H1 (cell line): ENCODE measurements at regions of chr7 and their contacts with region 1.

Region 1: GRCh38 chr7:151244196-151244840 is 4.2 kb downstream of the SMARCD3 start:
- DNase-seq: peak in 1 of 2 experiments; percentile 84
- H3K4me3 ChIP-seq: peak overlapping the region in 1 of 4 experiments; percentile 61; a peak in 4 of 8 replicates
- H3K27ac ChIP-seq: no peak overlapping the region
- H3K4me1 ChIP-seq: peaks cover 0 to 43% (median 29%) of the 10 kb centered on the region in 4 experiments; a peak in 6 of 7 replicates
- H3K27me3 ChIP-seq: peaks cover 16 to 46% (median 39%) of the 10 kb centered on the region in 4 experiments
- CTCF ChIP-seq: peak in 2 of 3 experiments; percentile 80 to 85; a peak in 3 of 4 replicates
- EP300 ChIP-seq: no peak
- POLR2A ChIP-seq: no peak
- RAD21 ChIP-seq: peak; percentile 63 to 79

Region 2: GRCh38 chr7:151172273-151173141 is 71.8 kb before region 1 on chr7:
- CTCF ChIA-PET with region 1: interaction called, 21 read pairs
- POLR2A ChIA-PET with region 1: no interaction called
- DNase-seq: peak in 1 of 2 experiments; percentile 93
- H3K4me3 ChIP-seq: no peak overlapping the region
- H3K27ac ChIP-seq: no peak overlapping the region
- H3K4me1 ChIP-seq: no peaks in the 10 kb centered on the region; a peak in 1 of 7 replicates
- H3K27me3 ChIP-seq: peaks cover 24 to 67% (median 55%) of the 10 kb centered on the region in 4 experiments
- CTCF ChIP-seq: peak in 2 of 3 experiments; percentile 100; a peak in 3 of 4 replicates
- EP300 ChIP-seq: no peak
- POLR2A ChIP-seq: no peak
- RAD21 ChIP-seq: peak; percentile 93 to 97

Region 3: GRCh38 chr7:151218170-151218569 is 26.1 kb before region 1 on chr7:
- CTCF ChIA-PET with region 1: interaction called, 20 read pairs
- POLR2A ChIA-PET with region 1: interaction called, 3 read pairs
- DNase-seq: no peak
- H3K4me3 ChIP-seq: no peak overlapping the region
- H3K27ac ChIP-seq: no peak overlapping the region
- H3K4me1 ChIP-seq: no peaks in the 10 kb centered on the region
- H3K27me3 ChIP-seq: no peaks in the 10 kb centered on the region
- CTCF ChIP-seq: no peak
- EP300 ChIP-seq: no peak
- POLR2A ChIP-seq: no peak
- RAD21 ChIP-seq: no peak

Region 4: DNA sequence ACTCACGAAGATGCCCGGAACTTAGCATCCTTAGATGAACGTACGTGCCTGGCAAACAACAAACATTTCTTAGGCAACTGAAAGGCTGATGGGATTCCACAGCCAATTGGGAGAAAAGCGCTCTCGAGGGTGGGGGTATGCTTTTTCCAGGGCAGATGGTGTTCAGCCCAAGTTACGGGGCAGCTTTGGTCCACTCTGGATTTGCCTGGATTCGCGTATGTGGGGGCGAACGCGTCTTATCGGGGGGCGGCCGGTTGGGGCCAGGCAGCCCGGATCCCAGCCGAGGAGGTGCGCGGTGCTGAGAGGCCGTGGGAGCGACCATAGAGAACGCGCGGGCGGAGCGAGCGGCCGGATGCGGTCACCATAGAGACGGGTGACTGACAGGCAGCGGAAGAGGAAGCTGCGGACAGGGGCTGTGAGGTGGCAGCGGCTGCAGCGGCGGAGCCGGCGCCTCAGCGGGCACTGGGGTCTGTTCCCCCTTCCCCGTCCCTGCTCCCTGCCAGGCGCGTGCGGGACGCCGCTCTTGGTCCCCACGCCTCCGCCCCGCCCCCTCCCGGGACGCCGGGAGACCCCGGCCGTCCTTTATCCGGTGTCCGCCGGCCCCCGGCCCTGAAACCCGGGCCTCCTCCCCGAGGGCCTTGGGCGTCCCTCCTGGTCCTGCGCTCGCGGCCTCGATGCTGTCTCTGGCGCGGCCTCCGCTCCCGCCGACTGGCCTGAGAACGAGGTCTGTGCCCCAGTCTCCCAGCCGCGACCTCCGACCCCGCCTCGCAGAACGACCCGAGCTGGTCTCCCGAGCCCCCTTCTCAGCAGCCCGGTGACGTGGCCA is 12.0 kb before region 1 on chr7 and contains the start of gene CHPF2:
- CTCF ChIA-PET with region 1: interaction called, 71 read pairs
- POLR2A ChIA-PET with region 1: interaction called, 16 read pairs
- DNase-seq: peak in 1 of 2 experiments; percentile 93
- H3K4me3 ChIP-seq: peak within 1 kb of the TSS; percentile 72 to 96 (median 90)
- H3K27ac ChIP-seq: no peak within 1 kb of the TSS; the same call in 1 of the 2 replicates
- H3K4me1 ChIP-seq: peaks cover 4 to 9% (median 6%) of the 10 kb centered on the region in 4 experiments; a peak in 5 of 7 replicates
- H3K27me3 ChIP-seq: no peaks in the 10 kb centered on the region
- CTCF ChIP-seq: no peak
- EP300 ChIP-seq: no peak
- POLR2A ChIP-seq: peak in 1 of 2 experiments; percentile 75; a peak in 2 of 3 replicates
- RAD21 ChIP-seq: no peak
- total RNA-seq, gene CHPF2: 20.6 and 20.8 TPM in 2 replicates

Region 5: DNA sequence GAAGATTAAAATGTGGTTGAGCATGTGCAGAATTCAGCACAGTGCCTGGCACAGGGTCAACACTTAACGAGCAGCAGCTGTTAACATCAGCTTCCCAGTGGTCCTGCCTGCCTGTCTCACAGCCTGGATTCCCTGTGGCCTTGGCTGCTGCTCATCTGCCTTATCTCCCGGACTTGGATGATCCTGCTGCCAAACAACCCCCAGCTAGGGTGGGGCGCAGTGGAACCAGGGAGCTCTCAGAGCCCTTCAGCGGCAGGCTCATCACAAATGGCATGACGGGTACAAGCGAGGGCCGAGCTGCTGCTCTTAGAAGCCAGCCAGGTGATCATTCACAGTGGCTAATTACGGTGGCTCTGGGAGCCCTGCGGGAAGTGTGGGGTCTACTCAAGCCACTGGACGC is 17.2 kb after region 1 on chr7:
- CTCF ChIA-PET with region 1: interaction called, 25 read pairs
- POLR2A ChIA-PET with region 1: interaction called, 4 read pairs
- DNase-seq: no peak
- H3K4me3 ChIP-seq: no peak overlapping the region
- H3K27ac ChIP-seq: no peak overlapping the region
- H3K4me1 ChIP-seq: no peaks in the 10 kb centered on the region; a peak in 1 of 7 replicates
- H3K27me3 ChIP-seq: peaks cover 0 to 1% (median under 1%) of the 10 kb centered on the region in 4 experiments; a peak in 2 of 7 replicates
- CTCF ChIP-seq: no peak
- EP300 ChIP-seq: no peak
- POLR2A ChIP-seq: no peak
- RAD21 ChIP-seq: no peak

Region 6: DNA sequence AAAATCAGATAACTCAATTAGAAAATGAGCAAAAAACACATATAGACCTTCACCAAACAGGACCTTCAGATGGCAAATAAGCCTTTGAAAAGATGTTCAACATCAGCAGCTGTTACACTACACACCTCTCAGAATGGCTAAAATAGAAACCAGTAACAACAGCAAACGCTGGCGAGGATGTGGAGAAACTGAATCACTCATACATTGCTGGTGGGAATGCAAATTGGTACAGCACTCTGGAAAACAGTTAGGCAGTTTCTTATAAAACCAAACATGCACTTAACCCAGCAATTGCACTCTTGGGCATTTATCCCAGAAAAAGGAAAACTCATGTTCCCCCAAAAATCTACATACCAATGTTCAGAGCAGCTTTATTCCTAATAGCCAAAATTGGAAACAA is 41.8 kb after region 1 on chr7:
- CTCF ChIA-PET with region 1: interaction called, 17 read pairs
- POLR2A ChIA-PET with region 1: no interaction called
- DNase-seq: no peak
- H3K4me3 ChIP-seq: no peak overlapping the region
- H3K27ac ChIP-seq: no peak overlapping the region
- H3K4me1 ChIP-seq: peaks cover 0 to 5% (median 0%) of the 10 kb centered on the region in 4 experiments; a peak in 1 of 7 replicates
- H3K27me3 ChIP-seq: no peaks in the 10 kb centered on the region
- CTCF ChIP-seq: no peak
- EP300 ChIP-seq: no peak
- POLR2A ChIP-seq: no peak
- RAD21 ChIP-seq: no peak

Region 7: GRCh38 chr7:151408839-151409666 is 164.7 kb after region 1 on chr7:
- CTCF ChIA-PET with region 1: no interaction called
- POLR2A ChIA-PET with region 1: no interaction called
- DNase-seq: peak in 1 of 2 experiments; percentile 75
- H3K4me3 ChIP-seq: peak overlapping the region; percentile 69 to 84 (median 80)
- H3K27ac ChIP-seq: no peak overlapping the region
- H3K4me1 ChIP-seq: peaks cover 0 to 22% (median 16%) of the 10 kb centered on the region in 4 experiments; a peak in 6 of 7 replicates
- H3K27me3 ChIP-seq: peaks cover 0 to 25% (median 15%) of the 10 kb centered on the region in 4 experiments; a peak in 5 of 7 replicates
- CTCF ChIP-seq: no peak
- EP300 ChIP-seq: no peak
- POLR2A ChIP-seq: peak in 1 of 2 experiments; percentile 37; a peak in 2 of 3 replicates
- RAD21 ChIP-seq: no peak

Region 8: DNA sequence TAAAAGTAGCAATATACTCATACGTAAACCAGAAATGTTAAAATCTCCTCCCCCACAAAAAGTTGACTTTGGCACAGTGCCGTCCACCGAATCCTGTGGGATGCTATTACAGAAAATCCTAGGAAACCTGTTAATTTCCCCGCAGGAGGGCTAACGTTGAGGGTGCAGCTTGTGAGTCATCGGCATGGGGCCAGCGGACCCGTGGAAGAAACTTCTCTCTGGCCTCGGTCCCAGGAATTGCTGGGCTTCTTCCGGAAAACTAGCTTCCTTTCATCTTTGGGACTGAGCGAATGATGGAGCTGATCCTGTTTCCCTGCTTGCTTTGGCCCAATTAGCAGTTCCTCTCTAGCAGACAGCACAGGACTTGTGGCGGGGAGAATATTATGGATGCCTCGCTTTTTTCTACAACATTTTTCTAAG is 182.2 kb after region 1 on chr7:
- CTCF ChIA-PET with region 1: no interaction called
- POLR2A ChIA-PET with region 1: no interaction called
- DNase-seq: no peak
- H3K4me3 ChIP-seq: no peak overlapping the region
- H3K27ac ChIP-seq: no peak overlapping the region
- H3K4me1 ChIP-seq: peaks cover 5 to 20% (median 11%) of the 10 kb centered on the region in 4 experiments
- H3K27me3 ChIP-seq: no peaks in the 10 kb centered on the region
- CTCF ChIP-seq: no peak
- EP300 ChIP-seq: no peak
- POLR2A ChIP-seq: no peak
- RAD21 ChIP-seq: no peak

Region 9: DNA sequence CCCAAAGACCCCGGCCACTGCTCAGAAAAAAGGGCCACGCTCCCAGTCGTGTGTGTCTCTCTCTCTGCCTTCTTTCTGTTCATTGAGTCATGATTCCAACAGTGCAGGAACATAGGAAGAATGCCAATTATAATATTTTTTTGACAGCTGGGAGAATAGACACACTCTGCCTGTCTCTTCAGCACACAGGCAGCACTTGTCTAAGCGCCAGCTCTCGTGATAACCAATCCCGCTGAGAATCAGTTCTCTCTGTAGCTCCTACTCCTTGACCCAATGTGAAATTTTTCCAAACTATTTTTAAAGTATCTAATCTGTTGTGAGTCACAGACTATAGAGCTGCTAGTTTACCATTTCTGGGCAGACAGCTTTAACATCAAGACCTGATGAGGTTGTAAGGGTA is 421.1 kb after region 1 on chr7:
- CTCF ChIA-PET with region 1: no interaction called
- POLR2A ChIA-PET with region 1: no interaction called
- DNase-seq: no peak
- H3K4me3 ChIP-seq: no peak overlapping the region
- H3K27ac ChIP-seq: no peak overlapping the region
- H3K4me1 ChIP-seq: no peaks in the 10 kb centered on the region; a peak in 1 of 7 replicates
- H3K27me3 ChIP-seq: no peaks in the 10 kb centered on the region
- CTCF ChIP-seq: no peak
- EP300 ChIP-seq: no peak
- POLR2A ChIP-seq: no peak
- RAD21 ChIP-seq: no peak